Right ventricle myocardium superior (tissue), 1 donor: ENCODE measurements at regions of chrX and their contacts with region 1.

Region 1: GRCh38 chrX:33434256-33435092 is 223.1 kb upstream of the DMD start:
- DNase-seq: no peak
- ATAC-seq: peak; percentile 52

Region 2: DNA sequence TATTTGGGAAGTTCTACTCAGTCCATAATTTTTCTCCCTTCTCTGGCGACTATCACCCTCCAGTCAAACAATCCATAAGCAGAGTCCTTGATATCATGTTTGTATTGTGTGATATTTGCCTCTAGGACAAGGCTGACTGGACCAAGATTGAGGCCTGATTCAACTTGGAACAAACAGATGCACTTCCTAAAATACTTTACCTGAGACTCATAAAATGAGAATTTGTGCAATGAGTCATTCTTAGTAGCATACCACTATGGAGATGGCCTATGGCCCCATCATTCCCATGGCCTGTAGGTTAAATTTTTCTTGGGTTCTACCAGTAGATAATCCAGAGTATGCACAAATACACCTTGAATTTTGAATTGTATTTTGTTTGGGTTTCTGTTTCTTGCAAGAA is 148.9 kb before region 1 on chrX:
- intact Hi-C with region 1: no loop called
- DNase-seq: no peak
- ATAC-seq: no peak

Region 3: DNA sequence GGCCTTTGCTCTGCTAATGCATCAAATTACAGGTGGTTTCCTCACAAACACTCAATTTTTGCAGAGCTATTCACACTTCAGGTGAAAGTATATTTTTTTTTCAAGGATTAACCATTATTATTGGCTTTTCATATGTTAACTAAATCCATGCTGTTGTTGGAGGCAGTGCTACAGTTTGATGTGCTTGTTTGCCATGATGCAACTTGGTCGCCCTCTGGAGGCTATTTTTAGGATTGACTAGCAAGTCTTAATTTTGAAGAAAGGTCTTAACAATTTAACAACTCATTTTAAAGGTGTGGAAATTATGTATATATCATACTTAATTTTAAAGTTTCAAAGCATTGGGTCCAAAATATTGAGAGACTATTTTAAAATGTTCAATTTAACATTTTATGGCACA is 866.4 kb after region 1 on chrX:
- intact Hi-C with region 1: loop called (anchors 10 kb)
- DNase-seq: no peak
- ATAC-seq: no peak